ENCODE measurements at regions of chr7 and their contacts with region 1.

Region 1: GRCh38 chr7:106542550-106543220 is 118.3 kb downstream of the CCDC71L start:
- DNase-seq: no peak
- H3K4me3 ChIP-seq: no peak overlapping the region
- H3K27ac ChIP-seq: peak overlapping the region; percentile 74
- H3K4me1 ChIP-seq: peaks cover 18% of the 10 kb centered on the region
- H3K27me3 ChIP-seq: no peaks in the 10 kb centered on the region
- CTCF ChIP-seq: peak; percentile 5 to 76 (median 32)
- POLR2A ChIP-seq: no peak

Region 2: DNA sequence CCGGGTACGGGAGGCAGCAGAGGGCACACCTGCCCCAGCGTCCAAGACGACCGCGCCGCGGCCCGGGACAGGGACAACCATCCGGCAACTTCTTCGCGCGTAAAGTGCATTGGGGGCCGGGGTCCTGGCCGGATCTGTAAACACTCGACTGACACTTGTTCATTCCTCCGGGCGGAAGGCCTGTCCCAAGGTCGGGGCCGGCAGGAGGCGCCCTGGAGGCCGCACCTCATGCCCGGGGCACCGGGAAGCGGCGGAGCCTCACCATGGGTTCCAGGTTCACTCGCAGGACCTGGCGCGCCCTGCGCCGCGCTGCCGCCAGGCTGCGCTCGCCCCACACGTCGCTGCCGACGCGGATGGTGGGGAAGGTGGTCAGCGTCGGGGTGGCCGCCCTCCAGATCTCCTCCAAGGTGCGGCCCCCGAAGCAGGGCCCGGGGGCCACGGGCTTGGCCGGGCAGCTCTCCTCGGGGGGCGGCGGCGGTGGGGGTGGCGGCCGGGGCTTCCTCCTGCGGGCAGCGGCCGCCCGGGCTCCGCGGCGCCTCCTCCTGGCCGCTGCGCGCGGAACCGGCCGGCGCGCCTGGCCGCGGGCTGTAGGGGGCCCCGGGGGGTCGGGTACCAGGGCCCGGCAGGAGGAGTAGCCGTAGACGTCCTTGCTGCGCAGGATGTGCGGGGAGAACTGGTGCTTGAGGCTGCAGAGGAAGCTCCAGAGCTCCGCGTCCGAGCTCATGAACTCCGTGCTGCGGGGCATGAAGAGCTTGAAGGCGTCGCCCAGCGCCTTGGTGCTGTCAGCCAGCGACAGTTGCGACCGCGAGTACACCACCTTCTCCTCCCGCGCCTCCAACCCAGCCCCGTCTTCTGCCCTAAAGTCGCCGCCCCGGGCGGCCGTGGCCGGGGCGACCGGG is 117.5 kb after region 1 on chr7:
- intact Hi-C with region 1: loop called (anchors 2 kb)
- DNase-seq: no peak
- H3K4me3 ChIP-seq: peak overlapping the region; percentile 75 to 92
- H3K27ac ChIP-seq: peak overlapping the region; percentile 98
- H3K4me1 ChIP-seq: peaks cover 25% of the 10 kb centered on the region
- H3K27me3 ChIP-seq: no peaks in the 10 kb centered on the region
- CTCF ChIP-seq: peak in 2 of 3 experiments; percentile 38 to 44
- POLR2A ChIP-seq: no peak

Region 3: DNA sequence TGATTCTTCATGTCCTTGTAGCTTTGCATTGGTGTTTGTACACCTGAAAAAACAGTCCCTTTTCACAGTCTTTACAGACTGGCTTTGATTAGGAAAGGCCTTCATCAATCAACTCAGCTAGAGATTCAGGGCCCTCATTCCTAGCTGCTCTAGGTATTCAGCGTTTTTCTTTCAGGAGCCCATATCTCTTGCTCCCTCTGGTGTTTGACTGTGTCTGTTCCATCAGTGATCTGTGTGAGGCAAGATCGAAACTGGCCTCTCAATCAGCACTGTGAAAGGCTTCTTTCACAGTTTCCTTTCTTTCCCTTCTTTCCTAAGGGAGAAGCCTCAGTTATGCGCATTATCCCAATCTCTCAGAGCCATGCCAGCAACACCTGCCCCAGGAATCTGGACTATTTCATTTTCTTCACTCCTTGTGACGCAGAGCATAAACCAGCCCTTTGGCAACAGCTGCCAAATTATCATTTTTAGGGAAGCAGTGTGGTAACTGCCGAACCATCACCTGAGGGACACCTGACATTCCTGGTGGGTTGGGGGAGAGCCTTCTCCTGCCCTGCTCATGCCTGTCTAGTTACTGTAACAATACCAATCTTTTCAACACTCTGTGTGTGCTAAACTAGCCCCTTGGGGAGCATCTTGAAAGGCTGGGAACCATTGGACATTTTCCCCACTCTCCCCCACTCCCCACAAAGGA is 194.0 kb after region 1 on chr7:
- intact Hi-C with region 1: loop called (anchors 10 kb)
- DNase-seq: no peak
- H3K4me3 ChIP-seq: no peak overlapping the region
- H3K27ac ChIP-seq: no peak overlapping the region
- H3K4me1 ChIP-seq: peaks cover 8% of the 10 kb centered on the region
- H3K27me3 ChIP-seq: no peaks in the 10 kb centered on the region
- CTCF ChIP-seq: peak in 2 of 3 experiments; percentile 51 to 55
- POLR2A ChIP-seq: no peak

Region 4: GRCh38 chr7:108299291-108299898 is 1756.7 kb after region 1 on chr7:
- intact Hi-C with region 1: no loop called
- DNase-seq: no peak
- H3K4me3 ChIP-seq: no peak overlapping the region
- H3K27ac ChIP-seq: no peak overlapping the region
- H3K4me1 ChIP-seq: no peaks in the 10 kb centered on the region
- H3K27me3 ChIP-seq: no peaks in the 10 kb centered on the region
- CTCF ChIP-seq: no peak
- POLR2A ChIP-seq: no peak